Activated CD4-positive, alpha-beta T cell treated with anti-CD3 and anti-CD28 coated beads for 36 hours (primary cell): ENCODE measurements at regions of chr19 and their contacts with region 1.

Region 1: GRCh38 chr19:12139885-12140547 is at the start of gene ZNF20:
- DNase-seq: peak; percentile 95
- ATAC-seq: peak; percentile 93
- H3K4me3 Mint-ChIP-seq: peak within 1 kb of the TSS; percentile 91
- H3K27ac Mint-ChIP-seq: peak within 1 kb of the TSS; percentile 73
- H3K4me1 Mint-ChIP-seq: peaks cover 32% of the 10 kb centered on the region
- H3K27me3 Mint-ChIP-seq: no peaks in the 10 kb centered on the region
- total RNA-seq, gene ZNF20: 3.2 to 3.3 TPM

Region 2: GRCh38 chr19:11848594-11849469 is 291.2 kb before region 1 on chr19 and contains the start of gene ZNF439:
- CTCF ChIA-PET with region 1: no interaction called
- POLR2A ChIA-PET with region 1: no interaction called
- intact Hi-C with region 1: loop called in 1 of 2 experiments (anchors 1 kb)
- DNase-seq: peak; percentile 96
- ATAC-seq: peak; percentile 100
- H3K4me3 Mint-ChIP-seq: peak within 1 kb of the TSS; percentile 80
- H3K27ac Mint-ChIP-seq: peak within 1 kb of the TSS; percentile 85
- H3K4me1 Mint-ChIP-seq: peaks cover 23% of the 10 kb centered on the region
- H3K27me3 Mint-ChIP-seq: no peaks in the 10 kb centered on the region
- total RNA-seq, gene ZNF439: 10.4 to 11.4 TPM

Region 3: DNA sequence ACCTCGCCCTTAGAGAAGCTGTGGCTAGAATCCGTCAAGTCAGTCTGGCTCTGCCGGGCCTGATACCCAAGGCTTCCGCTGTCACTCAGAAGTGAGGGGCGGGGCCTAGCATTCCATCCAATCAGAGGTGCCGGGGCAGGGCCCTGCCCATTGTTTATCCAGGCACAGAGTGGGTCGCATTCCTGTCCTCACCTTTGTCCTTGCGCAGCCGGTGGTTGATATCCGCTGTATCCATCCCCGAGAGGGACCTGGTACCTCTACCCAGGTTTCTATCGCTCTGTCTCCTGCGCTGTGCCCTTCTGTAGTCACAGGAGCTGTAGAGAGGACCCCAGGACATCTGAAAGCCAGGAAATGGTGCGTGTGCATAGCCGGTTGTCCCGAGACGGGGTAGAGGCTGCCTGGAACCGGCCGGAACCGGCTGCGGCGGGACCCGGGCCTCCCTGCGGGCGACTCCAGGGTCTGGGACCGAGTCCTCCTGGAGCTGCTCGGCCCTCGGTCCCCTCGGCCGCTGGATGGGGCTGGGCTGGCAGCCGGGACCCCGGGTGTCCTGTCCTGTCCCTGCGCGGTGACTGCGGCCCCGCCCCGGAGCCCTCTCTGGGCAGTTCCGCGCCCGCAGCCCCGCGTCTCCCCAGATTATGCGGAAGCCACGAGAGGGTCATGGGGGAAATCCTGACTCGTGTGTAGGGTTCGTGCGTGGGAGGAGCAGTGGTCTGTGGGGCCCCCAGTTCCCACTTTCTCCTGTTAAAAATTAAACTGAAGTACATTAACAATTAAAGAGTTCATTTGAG is 175.0 kb before region 1 on chr19 and contains the start of gene ZNF763:
- CTCF ChIA-PET with region 1: interaction called, 6 read pairs
- POLR2A ChIA-PET with region 1: no interaction called
- intact Hi-C with region 1: loop called (anchors 1 kb)
- DNase-seq: peak; percentile 94
- ATAC-seq: peak; percentile 98
- H3K4me3 Mint-ChIP-seq: peak within 1 kb of the TSS; percentile 84
- H3K27ac Mint-ChIP-seq: peak within 1 kb of the TSS; percentile 73
- H3K4me1 Mint-ChIP-seq: peaks cover 20% of the 10 kb centered on the region
- H3K27me3 Mint-ChIP-seq: no peaks in the 10 kb centered on the region
- total RNA-seq, gene ZNF763: 1.1 to 1.2 TPM

Region 4: DNA sequence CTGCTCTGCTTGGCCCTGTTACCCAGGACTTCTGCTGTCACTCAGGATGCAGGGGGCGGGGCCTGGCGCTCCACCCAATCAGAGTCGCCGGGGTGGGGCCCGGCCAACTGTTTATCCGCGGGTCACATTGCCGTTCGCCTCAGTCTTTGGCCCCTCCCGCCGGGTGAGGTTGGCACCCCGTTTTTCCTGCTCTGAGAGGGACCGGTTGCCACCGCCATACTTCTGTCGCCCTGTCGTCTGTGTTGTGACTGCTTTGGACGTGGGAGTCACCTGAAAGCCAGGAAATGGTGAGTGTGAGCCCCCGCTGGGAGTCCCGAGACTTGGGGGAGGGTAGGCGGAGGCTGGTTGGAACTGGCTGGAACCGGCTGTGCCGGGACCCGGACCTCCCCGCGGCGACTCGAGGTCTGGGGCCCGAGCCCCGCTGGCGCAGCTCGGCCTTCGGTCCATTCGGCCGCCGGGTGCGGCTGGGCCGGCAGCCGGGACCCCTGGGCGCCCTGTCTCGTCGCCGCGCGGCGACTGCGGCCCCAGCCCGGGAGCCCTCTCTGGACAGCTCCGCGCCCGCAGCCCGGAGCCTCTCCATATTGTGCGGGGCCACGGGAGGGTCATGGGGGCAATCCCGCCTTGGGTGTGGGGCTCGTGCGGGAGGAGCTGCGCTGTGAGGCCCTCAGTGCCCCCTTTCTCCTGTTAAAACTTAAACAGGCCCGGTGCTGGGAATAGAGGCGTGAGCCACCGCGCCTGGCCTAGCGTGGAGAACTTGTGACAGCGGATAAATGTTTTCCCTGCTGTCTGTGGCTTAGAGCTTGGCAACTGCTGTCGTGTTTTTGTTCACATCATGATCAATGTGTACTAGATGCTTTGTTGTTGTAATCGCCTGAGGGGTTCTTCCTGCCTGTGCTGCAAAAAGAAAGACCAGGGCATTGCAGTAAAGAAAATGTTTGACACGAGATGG is 75.2 kb before region 1 on chr19 and contains the start of gene ZNF844:
- CTCF ChIA-PET with region 1: interaction called, 40 read pairs
- POLR2A ChIA-PET with region 1: interaction called, 6 read pairs
- intact Hi-C with region 1: no loop called
- DNase-seq: peak; percentile 91
- ATAC-seq: peak; percentile 94
- H3K4me3 Mint-ChIP-seq: peak within 1 kb of the TSS; percentile 79
- H3K27ac Mint-ChIP-seq: peak within 1 kb of the TSS; percentile 86
- H3K4me1 Mint-ChIP-seq: peaks cover 5% of the 10 kb centered on the region
- H3K27me3 Mint-ChIP-seq: no peaks in the 10 kb centered on the region
- total RNA-seq, gene ZNF844: 4.4 to 5.5 TPM

Region 5: GRCh38 chr19:12162882-12163806 is 23.1 kb after region 1 on chr19 and contains the start of gene ZNF136:
- CTCF ChIA-PET with region 1: interaction called, 3 read pairs
- POLR2A ChIA-PET with region 1: no interaction called
- intact Hi-C with region 1: loop called in 1 of 2 experiments (anchors 1 kb)
- DNase-seq: peak; percentile 97
- ATAC-seq: peak; percentile 100
- H3K4me3 Mint-ChIP-seq: peak within 1 kb of the TSS; percentile 98
- H3K27ac Mint-ChIP-seq: peak within 1 kb of the TSS; percentile 99
- H3K4me1 Mint-ChIP-seq: peaks cover 38% of the 10 kb centered on the region
- H3K27me3 Mint-ChIP-seq: no peaks in the 10 kb centered on the region
- total RNA-seq, gene ZNF136: 11.7 to 12.9 TPM

Region 6: DNA sequence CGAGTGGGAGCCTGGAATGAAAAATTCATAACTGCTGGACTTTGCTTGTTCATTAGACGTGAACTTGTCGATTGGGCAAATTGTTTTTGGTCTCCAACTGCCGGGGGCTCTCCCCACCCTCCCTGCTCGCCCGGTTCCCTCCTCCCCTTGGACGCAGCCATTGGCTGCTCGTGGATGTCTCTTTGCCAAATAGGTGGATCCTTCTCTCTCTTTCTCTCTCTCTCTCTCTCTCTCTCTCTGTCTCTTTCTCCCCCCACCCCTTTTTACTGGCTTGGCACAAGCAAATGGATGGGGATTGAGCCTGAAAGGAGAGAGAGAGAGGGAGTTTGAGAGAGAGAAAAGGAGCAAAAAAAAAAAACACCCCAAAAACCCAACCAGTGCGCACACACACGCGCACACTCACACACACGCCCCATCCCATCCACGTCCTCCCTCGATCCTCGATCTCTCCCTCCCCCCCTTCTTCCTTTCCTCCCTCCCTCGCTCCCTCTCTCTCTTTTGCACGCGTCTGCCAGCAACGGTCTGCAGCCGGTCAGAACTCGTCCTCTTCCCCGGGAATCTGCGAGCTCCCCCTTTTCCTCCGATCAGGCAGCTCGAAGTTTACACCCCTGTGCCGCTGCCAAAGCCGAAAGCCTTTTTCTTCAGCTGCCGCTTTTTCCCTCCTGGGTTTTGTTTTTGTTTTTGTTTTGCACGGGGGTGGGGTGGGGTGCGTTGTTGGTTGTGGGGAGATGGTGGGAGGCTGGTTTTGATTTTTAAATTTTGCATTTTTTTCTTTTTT is 883.0 kb after region 1 on chr19:
- CTCF ChIA-PET with region 1: no interaction called
- POLR2A ChIA-PET with region 1: no interaction called
- intact Hi-C with region 1: no loop called
- DNase-seq: peak; percentile 35
- ATAC-seq: peak; percentile 53
- H3K4me3 Mint-ChIP-seq: peak overlapping the region; percentile 55
- H3K27ac Mint-ChIP-seq: no peak overlapping the region
- H3K4me1 Mint-ChIP-seq: peaks cover 18% of the 10 kb centered on the region
- H3K27me3 Mint-ChIP-seq: peaks cover 31% of the 10 kb centered on the region